Panc1 (cell line): ENCODE measurements at regions of chr5 and their contacts with region 1.

Region 1: GRCh38 chr5:177339107-177339638 is 12.3 kb downstream of the LMAN2 start:
- DNase-seq: no peak
- ATAC-seq: no peak
- H3K4me3 ChIP-seq: no peak overlapping the region
- H3K27ac ChIP-seq: no peak overlapping the region
- H3K4me1 ChIP-seq: no peaks in the 10 kb centered on the region
- H3K27me3 ChIP-seq: no peaks in the 10 kb centered on the region
- CTCF ChIP-seq: no peak

Region 2: DNA sequence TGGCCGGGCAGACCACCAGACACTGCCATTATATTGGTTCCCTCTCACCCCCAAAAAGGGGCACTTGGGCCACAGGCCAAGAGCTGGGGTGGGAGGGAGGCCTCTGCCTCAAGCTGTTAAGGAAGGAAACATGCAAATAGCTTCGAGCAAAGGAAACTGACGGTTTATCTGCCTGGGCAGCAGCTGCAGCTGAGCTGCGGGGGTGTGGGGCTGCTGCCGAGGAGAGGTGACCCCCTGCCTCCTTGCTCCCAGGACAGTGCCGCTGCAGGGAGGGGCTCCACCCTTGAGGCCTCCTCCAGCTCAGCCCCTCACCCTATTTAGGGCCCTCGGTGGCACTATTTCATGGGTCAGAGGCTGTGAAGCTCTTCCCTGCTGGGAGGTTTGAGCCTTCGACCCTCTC is 169.7 kb after region 1 on chr5:
- CTCF ChIA-PET with region 1: no interaction called
- POLR2A ChIA-PET with region 1: interaction called, 11 read pairs
- in situ Hi-C with region 1: no loop called
- intact Hi-C with region 1: no loop called
- DNase-seq: no peak
- ATAC-seq: no peak
- H3K4me3 ChIP-seq: no peak overlapping the region
- H3K27ac ChIP-seq: no peak overlapping the region
- H3K4me1 ChIP-seq: peaks cover 3% of the 10 kb centered on the region; the same call in 1 of the 2 replicates
- H3K27me3 ChIP-seq: no peaks in the 10 kb centered on the region
- CTCF ChIP-seq: no peak

Region 3: DNA sequence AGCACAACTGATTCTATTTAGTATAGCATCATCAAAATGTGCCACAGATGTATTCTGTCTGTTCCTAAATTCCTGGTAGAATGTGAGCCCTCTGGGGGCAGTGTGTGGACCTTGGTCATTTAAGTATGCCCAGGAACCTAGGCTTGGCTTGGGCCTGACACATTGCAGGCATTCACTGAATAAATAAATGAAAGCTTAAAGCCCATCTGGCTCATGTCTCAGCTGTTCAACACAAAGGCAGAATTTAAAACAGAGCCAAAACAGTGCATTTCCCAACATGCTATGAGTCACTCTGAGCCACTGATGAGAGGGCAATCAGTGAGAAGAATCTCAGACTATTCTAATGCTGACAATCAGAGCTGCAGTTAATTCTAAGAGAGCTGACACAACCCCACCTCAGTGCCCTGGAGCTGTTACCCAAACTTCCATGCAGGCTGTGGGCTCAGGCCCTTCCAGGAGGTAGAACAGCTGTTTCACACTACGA is 207.1 kb after region 1 on chr5:
- CTCF ChIA-PET with region 1: no interaction called
- POLR2A ChIA-PET with region 1: no interaction called
- in situ Hi-C with region 1: no loop called
- intact Hi-C with region 1: no loop called
- DNase-seq: peak; percentile 82
- ATAC-seq: peak; percentile 89
- H3K4me3 ChIP-seq: no peak overlapping the region
- H3K27ac ChIP-seq: peak overlapping the region; percentile 69
- H3K4me1 ChIP-seq: peaks cover 32% of the 10 kb centered on the region
- H3K27me3 ChIP-seq: no peaks in the 10 kb centered on the region
- CTCF ChIP-seq: 0 out of 2 replicates have a peak, but pooled peaks have one; percentile 11